ENCODE measurements at regions of chrX and their contacts with region 1.

Region 1: DNA sequence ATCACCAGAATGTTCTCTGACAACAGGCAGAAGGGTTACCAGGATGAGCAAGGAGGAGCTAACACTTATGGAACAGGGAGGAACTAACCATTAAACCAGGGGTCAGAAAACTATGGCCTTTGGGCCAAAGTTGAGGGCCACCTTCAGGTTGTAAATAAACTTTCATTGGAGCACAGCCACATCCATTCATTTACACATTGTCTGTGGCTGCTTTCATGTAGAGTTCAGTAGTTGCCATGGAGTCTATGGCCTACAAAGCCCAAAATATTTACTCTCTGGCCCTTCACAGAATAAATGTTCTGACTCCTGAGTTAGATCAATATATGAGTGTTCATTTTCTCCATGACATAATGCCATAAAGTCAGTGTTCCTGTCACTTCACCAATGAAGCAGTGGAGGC is 13.2 kb upstream of the HCCS start:
- DNase-seq: no peak
- ATAC-seq: no peak
- H3K4me3 ChIP-seq: no peak overlapping the region
- H3K27ac ChIP-seq: no peak overlapping the region
- H3K4me1 ChIP-seq: no peaks in the 10 kb centered on the region
- H3K27me3 ChIP-seq: no peaks in the 10 kb centered on the region
- CTCF ChIP-seq: no peak
- EP300 ChIP-seq: no peak
- POLR2A ChIP-seq: no peak
- RAD21 ChIP-seq: no peak

Region 2: GRCh38 chrX:10875995-10876394 is 221.9 kb before region 1 on chrX:
- CTCF ChIA-PET with region 1: interaction called, 3 read pairs
- POLR2A ChIA-PET with region 1: no interaction called
- RAD21 ChIA-PET with region 1: no interaction called
- SMC1A ChIA-PET with region 1: no interaction called
- in situ Hi-C with region 1: no loop called
- intact Hi-C with region 1: loop called (anchors 10 kb)
- DNase-seq: peak; percentile 15
- ATAC-seq: peak; percentile 92
- H3K4me3 ChIP-seq: no peak overlapping the region
- H3K27ac ChIP-seq: no peak overlapping the region
- H3K4me1 ChIP-seq: no peaks in the 10 kb centered on the region
- H3K27me3 ChIP-seq: no peaks in the 10 kb centered on the region
- CTCF ChIP-seq: peak in 1 of 3 experiments; percentile 24; a peak in 2 of 6 replicates
- EP300 ChIP-seq: no peak
- POLR2A ChIP-seq: no peak
- RAD21 ChIP-seq: peak; percentile 30; the same call in 1 of the 2 replicates

Region 3: DNA sequence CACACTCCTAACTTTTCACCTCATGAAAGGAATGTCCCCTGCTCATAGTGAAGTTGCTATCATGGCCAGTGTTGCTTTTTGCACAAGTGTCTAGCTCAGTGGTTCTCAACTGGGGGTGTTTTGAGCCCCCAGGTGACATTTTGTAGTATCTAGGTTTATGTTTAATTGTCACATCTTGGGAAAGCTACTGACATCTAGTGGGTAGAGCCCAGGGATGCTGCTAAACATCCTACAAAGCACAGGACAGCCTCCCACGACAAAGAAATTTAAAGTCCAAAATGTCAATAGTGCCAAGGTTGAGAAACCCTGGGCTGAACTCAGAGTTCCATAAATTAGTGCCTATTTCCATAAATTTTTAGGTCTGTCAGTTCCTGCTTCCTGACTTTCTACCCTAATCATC is 57.5 kb before region 1 on chrX:
- CTCF ChIA-PET with region 1: no interaction called
- POLR2A ChIA-PET with region 1: no interaction called
- RAD21 ChIA-PET with region 1: no interaction called
- SMC1A ChIA-PET with region 1: no interaction called
- in situ Hi-C with region 1: no loop called
- intact Hi-C with region 1: no loop called
- DNase-seq: no peak
- ATAC-seq: no peak
- H3K4me3 ChIP-seq: no peak overlapping the region
- H3K27ac ChIP-seq: no peak overlapping the region
- H3K4me1 ChIP-seq: no peaks in the 10 kb centered on the region
- H3K27me3 ChIP-seq: no peaks in the 10 kb centered on the region
- CTCF ChIP-seq: no peak
- EP300 ChIP-seq: no peak
- POLR2A ChIP-seq: no peak
- RAD21 ChIP-seq: no peak